Activated CD4-positive, alpha-beta T cell treated with anti-CD3 and anti-CD28 coated beads for 36 hours (primary cell): ENCODE measurements at regions of chr1 and their contacts with region 1.

Region 1: GRCh38 chr1:117367047-117368018 is at the start of gene MAN1A2:
- DNase-seq: peak; percentile 82
- ATAC-seq: peak; percentile 60
- H3K4me3 Mint-ChIP-seq: peak within 1 kb of the TSS; percentile 85
- H3K27ac Mint-ChIP-seq: peak within 1 kb of the TSS; percentile 98
- H3K4me1 Mint-ChIP-seq: peaks cover 52% of the 10 kb centered on the region
- H3K27me3 Mint-ChIP-seq: no peaks in the 10 kb centered on the region
- total RNA-seq, gene MAN1A2: 18.5 to 20.4 TPM

Region 2: GRCh38 chr1:116418091-116418830 is 949.1 kb before region 1 on chr1:
- CTCF ChIA-PET with region 1: no interaction called
- POLR2A ChIA-PET with region 1: no interaction called
- intact Hi-C with region 1: loop called in 1 of 2 experiments (anchors 10 kb)
- DNase-seq: peak; percentile 92
- ATAC-seq: peak; percentile 88
- H3K4me3 Mint-ChIP-seq: peak overlapping the region; percentile 92
- H3K27ac Mint-ChIP-seq: peak overlapping the region; percentile 88
- H3K4me1 Mint-ChIP-seq: peaks cover 32% of the 10 kb centered on the region
- H3K27me3 Mint-ChIP-seq: no peaks in the 10 kb centered on the region

Region 3: DNA sequence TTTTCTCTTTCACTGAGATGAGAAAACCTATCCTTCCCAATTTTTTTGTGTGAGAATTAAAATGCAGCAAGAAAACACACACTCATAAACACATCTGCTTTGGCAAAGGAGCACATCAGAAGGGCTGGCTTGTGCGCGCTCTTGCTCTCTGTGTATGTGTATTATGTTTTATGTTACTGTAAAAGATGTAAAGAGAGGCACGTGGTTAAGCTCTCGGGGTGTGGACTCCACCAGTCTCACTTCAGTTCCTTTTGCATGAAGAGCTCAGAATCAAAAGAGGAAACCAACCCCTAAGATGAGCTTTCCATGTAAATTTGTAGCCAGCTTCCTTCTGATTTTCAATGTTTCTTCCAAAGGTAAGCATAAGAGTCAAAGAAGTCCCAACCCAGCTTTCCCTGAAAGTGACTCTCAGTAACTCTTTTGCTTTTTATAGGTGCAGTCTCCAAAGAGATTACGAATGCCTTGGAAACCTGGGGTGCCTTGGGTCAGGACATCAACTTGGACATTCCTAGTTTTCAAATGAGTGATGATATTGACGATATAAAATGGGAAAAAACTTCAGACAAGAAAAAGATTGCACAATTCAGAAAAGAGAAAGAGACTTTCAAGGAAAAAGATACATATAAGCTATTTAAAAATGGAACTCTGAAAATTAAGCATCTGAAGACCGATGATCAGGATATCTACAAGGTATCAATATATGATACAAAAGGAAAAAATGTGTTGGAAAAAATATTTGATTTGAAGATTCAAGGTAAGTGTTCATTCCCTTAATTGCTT is 612.9 kb before region 1 on chr1 and contains the start of gene CD2:
- CTCF ChIA-PET with region 1: no interaction called
- POLR2A ChIA-PET with region 1: no interaction called
- intact Hi-C with region 1: loop called in 1 of 2 experiments (anchors 5 kb)
- DNase-seq: peak; percentile 80
- ATAC-seq: peak; percentile 80
- H3K4me3 Mint-ChIP-seq: peak within 1 kb of the TSS; percentile 93
- H3K27ac Mint-ChIP-seq: peak within 1 kb of the TSS; percentile 100
- H3K4me1 Mint-ChIP-seq: peaks cover 41% of the 10 kb centered on the region
- H3K27me3 Mint-ChIP-seq: no peaks in the 10 kb centered on the region
- total RNA-seq, gene CD2: 287 to 291 TPM

Region 4: DNA sequence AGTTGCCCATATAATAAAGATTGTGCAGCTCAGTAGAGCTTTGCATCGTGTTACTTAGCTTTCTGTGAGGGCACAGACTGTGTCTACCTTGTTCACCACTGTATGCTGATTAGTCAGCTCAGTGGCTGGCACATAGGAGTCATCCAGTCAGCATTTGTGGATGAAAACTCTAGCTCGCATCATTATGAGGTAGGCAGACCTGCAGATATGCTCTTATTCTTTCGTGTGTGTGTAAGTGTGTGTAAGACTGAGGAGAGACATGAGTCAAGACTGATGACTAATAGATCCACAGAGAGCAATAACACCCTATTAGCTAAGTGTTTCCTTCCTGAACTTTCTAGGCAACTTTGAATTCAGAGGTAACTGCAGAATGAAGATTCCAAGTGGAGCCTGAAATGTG is 290.1 kb before region 1 on chr1:
- CTCF ChIA-PET with region 1: no interaction called
- POLR2A ChIA-PET with region 1: no interaction called
- intact Hi-C with region 1: loop called in 1 of 2 experiments (anchors 5 kb)
- DNase-seq: peak; percentile 78
- ATAC-seq: peak; percentile 99
- H3K4me3 Mint-ChIP-seq: no peak overlapping the region
- H3K27ac Mint-ChIP-seq: peak overlapping the region; percentile 86
- H3K4me1 Mint-ChIP-seq: peaks cover 40% of the 10 kb centered on the region
- H3K27me3 Mint-ChIP-seq: no peaks in the 10 kb centered on the region

Region 5: GRCh38 chr1:117534995-117535467 is 167.7 kb after region 1 on chr1:
- CTCF ChIA-PET with region 1: interaction called, 4 read pairs
- POLR2A ChIA-PET with region 1: no interaction called
- intact Hi-C with region 1: loop called (anchors 2 to 5 kb)
- DNase-seq: peak; percentile 48
- ATAC-seq: peak; percentile 81
- H3K4me3 Mint-ChIP-seq: no peak overlapping the region
- H3K27ac Mint-ChIP-seq: no peak overlapping the region
- H3K4me1 Mint-ChIP-seq: peaks cover 25% of the 10 kb centered on the region
- H3K27me3 Mint-ChIP-seq: peaks cover 2% of the 10 kb centered on the region

Region 6: DNA sequence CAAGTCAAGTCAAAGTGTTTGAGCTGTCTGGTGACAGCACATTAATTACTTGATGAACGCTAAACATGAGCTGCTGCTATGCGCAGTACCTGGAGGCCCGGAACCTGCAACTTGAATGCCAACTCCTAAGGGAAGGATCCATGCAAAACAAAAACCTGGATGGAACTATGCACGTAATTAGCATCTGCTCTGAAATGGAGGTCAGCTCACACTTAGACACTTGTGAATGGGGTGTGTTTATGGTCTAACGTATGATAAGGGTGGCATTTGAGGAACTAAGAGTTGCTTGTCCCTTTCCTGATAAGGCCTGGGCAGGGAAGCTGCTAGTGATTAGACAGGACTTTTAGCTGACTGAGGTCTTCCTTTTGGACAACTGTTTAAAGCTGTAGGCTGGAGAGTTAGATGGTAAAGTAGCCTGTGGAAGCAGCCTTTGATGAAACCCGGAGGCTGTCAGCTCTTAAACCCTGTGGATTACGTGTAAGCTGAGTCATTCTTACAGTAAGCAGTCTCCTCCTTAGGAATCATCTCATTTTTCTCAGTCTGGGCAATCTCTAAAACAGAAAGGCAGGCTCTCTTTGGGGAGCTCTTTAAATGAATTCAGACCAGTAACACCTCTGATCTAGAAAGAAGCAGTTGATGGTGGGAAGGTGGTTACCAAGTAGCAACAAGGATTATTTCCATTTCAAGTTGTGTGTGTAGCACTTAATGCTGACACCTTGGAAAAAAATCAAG is 245.3 kb after region 1 on chr1:
- CTCF ChIA-PET with region 1: no interaction called
- POLR2A ChIA-PET with region 1: no interaction called
- intact Hi-C with region 1: loop called in 1 of 2 experiments (anchors 10 kb)
- DNase-seq: peak; percentile 18
- ATAC-seq: peak; percentile 76
- H3K4me3 Mint-ChIP-seq: no peak overlapping the region
- H3K27ac Mint-ChIP-seq: peak overlapping the region; percentile 40
- H3K4me1 Mint-ChIP-seq: peaks cover 66% of the 10 kb centered on the region
- H3K27me3 Mint-ChIP-seq: peaks cover 5% of the 10 kb centered on the region

Region 7: GRCh38 chr1:119140177-119141019 is 1773.1 kb after region 1 on chr1 and contains the start of gene WARS2:
- CTCF ChIA-PET with region 1: no interaction called
- POLR2A ChIA-PET with region 1: no interaction called
- intact Hi-C with region 1: loop called in 1 of 2 experiments (anchors 5 kb)
- DNase-seq: peak; percentile 94
- ATAC-seq: peak; percentile 95
- H3K4me3 Mint-ChIP-seq: no peak within 1 kb of the TSS
- H3K27ac Mint-ChIP-seq: no peak within 1 kb of the TSS
- H3K4me1 Mint-ChIP-seq: peaks cover 13% of the 10 kb centered on the region
- H3K27me3 Mint-ChIP-seq: no peaks in the 10 kb centered on the region
- total RNA-seq, gene WARS2: 16.0 to 25.2 TPM